Psoas muscle (tissue), 8 donors: ENCODE measurements at regions of chr18 and their contacts with region 1.

Region 1: GRCh38 chr18:73842795-73843394 is 304.7 kb downstream of the FBXO15 start:
- DNase-seq: peak; percentile 25 to 64
- ATAC-seq: peak in 1 of 4 donors; percentile 49
- H3K4me3 ChIP-seq: no peak overlapping the region
- H3K27ac ChIP-seq: no peak overlapping the region
- H3K4me1 ChIP-seq: no peaks in the 10 kb centered on the region
- H3K27me3 ChIP-seq: no peaks in the 10 kb centered on the region
- CTCF ChIP-seq: peak; percentile 81

Region 2: DNA sequence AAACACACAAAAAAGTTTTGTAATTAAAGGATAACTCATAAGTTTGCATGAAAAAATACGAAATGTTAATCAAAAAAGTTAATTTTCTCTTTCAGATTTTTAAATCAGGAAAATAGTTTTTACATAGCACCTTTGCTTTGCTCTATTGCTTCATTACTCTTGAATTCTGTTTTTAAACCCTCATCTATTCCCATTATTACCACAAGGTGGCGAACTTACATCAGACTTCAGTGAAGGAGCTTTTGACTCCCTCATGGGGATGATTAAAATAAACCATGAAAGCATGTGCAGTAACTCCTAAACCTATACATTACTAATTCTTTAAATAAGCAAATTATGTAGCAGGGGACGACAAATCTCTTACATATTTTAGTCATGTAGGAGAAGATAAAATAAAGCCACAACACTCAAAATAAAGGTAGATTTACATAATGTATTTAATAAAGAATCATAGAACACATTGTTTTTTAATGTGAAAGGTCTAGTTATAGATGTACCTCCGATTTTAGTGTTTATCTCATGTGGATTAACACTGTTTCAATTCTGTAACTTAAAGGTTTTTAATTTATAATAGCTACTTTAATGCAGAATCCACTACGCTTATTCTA is 1080.3 kb before region 1 on chr18:
- intact Hi-C with region 1: loop called (anchors 5 to 10 kb)
- DNase-seq: no peak
- ATAC-seq: no peak
- H3K4me3 ChIP-seq: no peak overlapping the region
- H3K27ac ChIP-seq: no peak overlapping the region
- H3K4me1 ChIP-seq: no peaks in the 10 kb centered on the region
- H3K27me3 ChIP-seq: no peaks in the 10 kb centered on the region
- CTCF ChIP-seq: peak; percentile 58